ENCODE measurements at regions of chr7 and their contacts with region 1.

Region 1: DNA sequence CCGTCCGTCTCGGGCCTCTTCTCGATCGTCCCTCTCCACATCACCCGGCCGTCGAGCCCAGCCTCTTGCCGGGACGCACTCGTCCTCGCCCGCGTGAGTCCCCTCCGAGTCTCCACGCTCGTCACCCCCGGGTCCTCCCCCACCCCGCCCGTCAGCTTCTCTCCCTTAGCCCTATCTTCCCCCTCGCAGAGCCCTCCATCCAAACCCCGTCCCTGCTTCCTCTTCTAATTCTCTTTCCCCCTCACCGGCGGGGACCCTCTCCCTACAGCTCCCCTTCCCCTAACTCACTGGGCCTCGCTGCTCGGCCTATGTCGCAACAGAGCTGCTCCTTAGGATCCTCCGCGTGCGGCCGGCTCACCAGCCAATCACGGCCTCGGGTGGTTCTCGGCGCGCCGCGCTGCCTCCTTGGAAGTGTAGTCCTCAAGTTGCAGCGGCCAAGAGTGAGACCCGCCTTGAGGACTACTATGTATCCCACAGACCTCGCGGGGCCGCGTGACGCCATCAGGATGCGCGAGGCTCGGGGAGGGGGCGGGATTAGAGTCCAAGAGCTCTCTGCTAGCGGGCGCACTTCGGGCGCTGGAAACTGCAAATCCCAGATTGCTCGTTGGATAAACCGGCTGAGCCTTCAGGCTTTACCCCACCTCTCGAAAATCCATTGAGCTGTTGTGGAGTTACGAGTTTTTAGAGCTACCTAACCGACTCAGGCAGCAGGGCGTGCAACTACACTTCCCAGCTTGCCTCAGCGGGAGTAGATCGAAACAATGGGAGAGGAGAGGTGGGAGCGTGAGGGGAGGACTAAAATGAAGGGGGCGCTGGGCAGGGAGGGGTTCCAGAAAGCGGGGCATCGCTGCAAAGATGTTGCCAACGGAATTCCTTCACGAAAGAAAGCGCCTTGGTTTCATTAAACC is at the start of gene ABCF2:
- DNase-seq: peak; percentile 98 to 99
- H3K4me3 ChIP-seq: peak within 1 kb of the TSS; percentile 70
- H3K27ac ChIP-seq: peak within 1 kb of the TSS; percentile 66
- H3K4me1 ChIP-seq: peaks cover 30% of the 10 kb centered on the region
- H3K27me3 ChIP-seq: no peaks in the 10 kb centered on the region
- CTCF ChIP-seq: no peak
- total RNA-seq, gene ABCF2: 45.8 and 49.4 TPM in 2 replicates

Region 2: DNA sequence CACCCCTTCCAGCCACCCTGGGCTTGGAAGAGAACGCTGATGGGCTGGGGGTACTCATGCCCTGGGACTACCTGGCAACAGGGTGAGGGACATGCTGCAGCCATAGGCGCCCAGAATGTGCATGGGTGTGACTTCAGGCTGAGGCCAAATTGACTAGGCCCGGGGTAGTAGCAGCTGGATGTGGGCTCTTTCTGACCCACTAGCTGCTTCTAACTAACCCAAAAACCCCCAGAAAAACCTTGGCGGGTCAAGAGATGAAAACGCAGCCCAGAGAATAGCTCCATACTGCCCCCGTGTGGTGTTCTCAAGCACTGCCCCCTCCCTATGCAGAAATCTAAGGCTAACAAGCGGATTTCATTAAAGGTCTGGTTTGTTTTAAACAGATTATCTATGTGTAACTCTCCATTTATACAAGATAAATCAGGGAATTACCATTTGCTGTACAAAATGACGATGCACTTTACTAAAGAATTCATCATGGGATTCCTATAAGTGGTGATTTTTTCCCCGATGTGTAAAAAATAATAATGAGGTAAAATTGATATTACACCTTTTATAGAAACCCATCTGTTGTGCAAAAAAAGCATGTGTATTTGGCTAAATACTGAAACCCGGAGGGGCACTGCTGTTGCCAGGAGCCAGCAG is 17.2 kb after region 1 on chr7:
- CTCF ChIA-PET with region 1: interaction called, 23 read pairs
- POLR2A ChIA-PET with region 1: interaction called, 4 read pairs
- intact Hi-C with region 1: no loop called
- DNase-seq: peak in 1 of 2 experiments; percentile 44
- H3K4me3 ChIP-seq: no peak overlapping the region
- H3K27ac ChIP-seq: no peak overlapping the region
- H3K4me1 ChIP-seq: no peaks in the 10 kb centered on the region; the same call in 1 of the 2 replicates
- H3K27me3 ChIP-seq: peaks cover 25% of the 10 kb centered on the region
- CTCF ChIP-seq: peak; percentile 95